Activated CD4-positive, alpha-beta T cell treated with anti-CD3 and anti-CD28 coated beads for 36 hours (primary cell): ENCODE measurements at regions of chr3 and their contacts with region 1.

Region 1: GRCh38 chr3:112303764-112304325 is 9.8 kb upstream of the SLC9C1 start:
- DNase-seq: no peak
- ATAC-seq: peak; percentile 45
- H3K4me3 Mint-ChIP-seq: no peak overlapping the region
- H3K27ac Mint-ChIP-seq: no peak overlapping the region
- H3K4me1 Mint-ChIP-seq: no peaks in the 10 kb centered on the region
- H3K27me3 Mint-ChIP-seq: no peaks in the 10 kb centered on the region

Region 2: GRCh38 chr3:112314649-112315048 is 10.8 kb after region 1 on chr3:
- CTCF ChIA-PET with region 1: interaction called, 13 read pairs
- POLR2A ChIA-PET with region 1: no interaction called
- intact Hi-C with region 1: no loop called
- DNase-seq: no peak
- ATAC-seq: no peak
- H3K4me3 Mint-ChIP-seq: no peak overlapping the region
- H3K27ac Mint-ChIP-seq: no peak overlapping the region
- H3K4me1 Mint-ChIP-seq: no peaks in the 10 kb centered on the region
- H3K27me3 Mint-ChIP-seq: peaks cover 4% of the 10 kb centered on the region

Region 3: GRCh38 chr3:112395171-112395895 is 91.5 kb after region 1 on chr3:
- CTCF ChIA-PET with region 1: no interaction called
- POLR2A ChIA-PET with region 1: no interaction called
- intact Hi-C with region 1: no loop called
- DNase-seq: no peak
- ATAC-seq: no peak
- H3K4me3 Mint-ChIP-seq: no peak overlapping the region
- H3K27ac Mint-ChIP-seq: no peak overlapping the region
- H3K4me1 Mint-ChIP-seq: peaks cover 43% of the 10 kb centered on the region
- H3K27me3 Mint-ChIP-seq: no peaks in the 10 kb centered on the region